Heart right ventricle (tissue), 16 donors: ENCODE measurements at regions of chr6 and their contacts with region 1.

Region 1: DNA sequence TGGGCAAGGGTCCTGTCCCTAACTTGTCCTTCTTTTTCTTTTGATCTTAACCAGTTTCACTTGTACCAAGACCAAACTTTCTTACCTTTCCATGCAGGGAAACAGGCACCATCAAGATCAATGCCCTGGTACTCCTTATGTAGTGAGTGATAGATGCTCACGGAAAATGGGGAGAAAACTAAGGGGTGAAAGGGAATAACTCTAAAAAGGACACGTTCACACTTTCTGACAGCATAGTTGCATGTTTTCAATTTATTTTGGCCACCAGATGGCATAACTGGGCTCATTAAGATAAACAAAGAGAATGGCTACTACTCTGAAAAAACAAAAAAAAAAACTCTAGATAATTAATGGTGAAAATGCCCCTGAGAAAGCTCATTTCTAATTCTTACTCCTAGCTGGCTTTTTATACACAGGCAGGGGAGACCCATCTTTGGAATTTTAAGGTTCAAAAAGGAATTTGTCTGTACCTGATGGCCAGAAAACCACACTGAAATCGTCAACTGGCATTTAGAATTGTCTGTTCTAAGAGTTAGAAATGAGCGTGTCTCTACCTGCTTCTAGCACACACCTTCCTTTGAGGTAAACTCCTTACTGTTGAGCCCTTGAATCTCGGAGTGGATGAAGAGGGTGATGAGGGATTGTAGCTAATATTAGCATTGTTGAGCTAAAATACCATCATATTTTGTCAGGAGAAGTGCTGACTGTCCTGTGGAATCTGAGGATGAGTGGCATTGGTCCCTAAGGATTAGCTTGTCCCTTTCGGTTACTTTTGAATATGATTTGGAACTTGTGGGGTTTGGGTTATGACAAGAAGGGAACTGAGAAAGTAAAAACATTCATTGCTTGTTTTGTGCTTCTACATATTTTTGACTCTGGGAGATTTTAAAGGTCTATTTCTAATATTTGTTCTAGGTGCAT is 62.2 kb upstream of the DDR1 start:
- DNase-seq: no peak
- ATAC-seq: peak in 2 of 8 donors; percentile 30 to 37
- H3K4me3 ChIP-seq: no peak overlapping the region
- H3K27ac ChIP-seq: peak overlapping the region in 6 of 10 donors; percentile 13 to 81 (median 51)
- H3K4me1 ChIP-seq: peaks cover 6 to 61% (median 23%) of the 10 kb centered on the region in 9 donors
- H3K27me3 ChIP-seq: no peaks in the 10 kb centered on the region
- CTCF ChIP-seq: peak in 8 of 9 donors; percentile 27 to 67 (median 57)

Region 2: GRCh38 chr6:30678964-30679726 is 143.0 kb before region 1 on chr6:
- intact Hi-C with region 1: loop called in 1 of 10 experiments (anchors 5 kb)
- DNase-seq: peak; percentile 87 to 92
- ATAC-seq: peak; percentile 71 to 84 (median 74)
- H3K4me3 ChIP-seq: peak overlapping the region in 7 of 10 donors; percentile 3 to 75 (median 22)
- H3K27ac ChIP-seq: peak overlapping the region in 8 of 10 donors; percentile 8 to 100 (median 34)
- H3K4me1 ChIP-seq: peaks cover 14 to 57% (median 52%) of the 10 kb centered on the region in 9 donors
- H3K27me3 ChIP-seq: no peaks in the 10 kb centered on the region
- CTCF ChIP-seq: peak in 8 of 9 donors; percentile 93 to 97 (median 96)

Region 3: GRCh38 chr6:30864325-30864724 is 42.2 kb after region 1 on chr6:
- intact Hi-C with region 1: no loop called
- DNase-seq: no peak
- ATAC-seq: no peak
- H3K4me3 ChIP-seq: no peak overlapping the region
- H3K27ac ChIP-seq: no peak overlapping the region
- H3K4me1 ChIP-seq: no peaks in the 10 kb centered on the region
- H3K27me3 ChIP-seq: no peaks in the 10 kb centered on the region
- CTCF ChIP-seq: no peak

Region 4: DNA sequence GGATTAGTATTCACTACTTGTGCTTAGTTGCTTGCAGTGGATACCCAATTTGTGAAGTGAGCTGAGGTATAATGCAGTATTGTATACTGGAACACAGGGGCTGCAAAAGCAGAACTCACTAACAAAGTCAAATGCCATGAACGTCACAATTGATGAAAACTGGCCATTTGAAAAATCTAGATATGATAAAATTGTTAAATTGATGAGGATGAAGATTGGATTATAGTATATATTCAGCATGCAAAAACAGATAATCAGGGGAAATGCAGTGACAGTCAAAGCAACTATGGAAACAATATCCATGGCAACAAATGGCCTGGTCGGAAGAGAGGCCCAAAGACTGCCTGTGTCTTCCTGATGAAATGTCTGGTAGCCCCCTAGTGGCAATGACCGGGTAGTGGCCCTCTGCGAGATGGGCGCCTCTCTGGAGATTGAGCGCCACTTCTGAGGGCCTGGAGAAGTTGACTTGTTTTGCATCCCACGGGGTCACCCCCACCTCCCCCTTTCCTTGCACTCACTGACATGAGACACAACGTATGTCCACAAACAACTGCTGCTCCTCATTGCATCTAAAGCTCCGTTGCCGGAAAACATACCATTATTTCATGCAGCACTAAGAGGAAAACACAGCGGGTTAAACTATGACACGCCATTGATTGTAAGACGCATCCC is 246.7 kb after region 1 on chr6:
- intact Hi-C with region 1: loop called in 4 of 10 experiments (anchors 5 kb)
- DNase-seq: peak; percentile 74 to 81
- ATAC-seq: peak; percentile 77 to 93 (median 84)
- H3K4me3 ChIP-seq: no peak overlapping the region
- H3K27ac ChIP-seq: no peak overlapping the region
- H3K4me1 ChIP-seq: peaks cover 0 to 13% (median 0%) of the 10 kb centered on the region in 9 donors
- H3K27me3 ChIP-seq: no peaks in the 10 kb centered on the region
- CTCF ChIP-seq: peak; percentile 67 to 91 (median 86)

Region 5: DNA sequence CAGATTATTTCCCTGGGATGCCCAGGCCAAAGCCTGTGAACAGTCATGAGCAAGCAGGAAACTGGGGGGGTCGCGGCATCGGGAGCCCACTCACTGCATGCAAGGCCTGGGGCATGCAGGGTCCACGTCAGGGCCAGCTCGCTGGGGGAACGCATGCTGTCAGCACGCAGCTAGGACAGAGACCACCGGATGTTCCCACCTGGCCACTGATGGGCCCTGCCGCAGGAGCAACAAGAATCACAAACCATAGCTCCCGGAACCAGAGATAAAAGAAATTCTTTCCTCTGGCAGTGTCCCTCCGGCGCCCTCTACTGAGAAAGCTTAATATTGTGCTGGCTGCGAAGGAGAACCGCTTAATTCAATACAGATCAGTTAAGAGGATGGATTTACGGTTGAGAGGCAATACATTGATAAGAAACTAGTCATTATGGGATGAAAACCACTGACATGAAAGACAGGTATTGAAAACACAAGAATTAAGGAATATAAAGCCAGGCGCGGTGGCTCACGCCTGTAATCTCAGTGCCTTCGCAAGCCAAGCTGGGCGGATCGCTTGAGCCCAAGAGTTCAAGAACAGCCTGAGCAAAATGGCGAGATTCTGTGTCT is 257.6 kb after region 1 on chr6:
- intact Hi-C with region 1: loop called in 7 of 10 experiments (anchors 5 kb)
- DNase-seq: peak; percentile 40 to 63
- ATAC-seq: peak in 7 of 8 donors; percentile 63 to 83 (median 67)
- H3K4me3 ChIP-seq: peak overlapping the region in 6 of 10 donors; percentile 1 to 37 (median 34)
- H3K27ac ChIP-seq: no peak overlapping the region
- H3K4me1 ChIP-seq: peaks cover 0 to 12% (median 4%) of the 10 kb centered on the region in 9 donors
- H3K27me3 ChIP-seq: no peaks in the 10 kb centered on the region
- CTCF ChIP-seq: peak; percentile 56 to 90 (median 78)